CD4-positive, alpha-beta memory T cell (primary cell): ENCODE measurements at regions of chr9 and their contacts with region 1.

Region 1: DNA sequence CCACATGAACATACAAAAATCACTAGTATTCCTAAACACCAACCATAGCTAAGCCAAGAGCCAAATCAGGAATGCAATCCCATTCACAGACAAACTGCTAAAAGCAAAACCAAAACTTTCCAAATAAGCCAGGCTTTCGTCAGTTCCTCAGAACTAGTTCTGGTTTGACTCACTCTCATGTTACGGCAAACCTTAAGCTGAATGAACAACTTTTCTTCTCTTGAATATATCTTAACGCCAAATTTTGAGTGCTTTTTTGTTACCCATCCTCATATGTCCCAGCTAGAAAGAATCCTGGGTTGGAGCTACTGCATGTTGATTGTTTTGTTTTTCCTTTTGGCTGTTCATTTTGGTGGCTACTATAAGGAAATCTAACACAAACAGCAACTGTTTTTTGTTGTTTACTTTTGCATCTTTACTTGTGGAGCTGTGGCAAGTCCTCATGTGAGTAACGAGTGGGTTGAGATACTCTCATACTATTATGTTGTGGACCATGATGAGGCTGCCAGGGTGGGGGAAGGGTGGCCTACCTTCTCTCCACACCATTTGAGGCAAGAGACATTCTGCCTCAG is at the start of gene PDCD1LG2:
- DNase-seq: peak in 2 of 5 donors; percentile 9 to 10
- H3K4me3 ChIP-seq: peak within 1 kb of the TSS in 1 of 2 donors; percentile 16
- H3K4me3 Mint-ChIP-seq: peak within 1 kb of the TSS; percentile 82 to 90 (median 86)
- H3K27ac ChIP-seq: peak within 1 kb of the TSS; percentile 47
- H3K27ac Mint-ChIP-seq: peak within 1 kb of the TSS; percentile 80 to 95 (median 94)
- H3K4me1 ChIP-seq: peaks cover 34% of the 10 kb centered on the region
- H3K4me1 Mint-ChIP-seq: peaks cover 37 to 62% (median 46%) of the 10 kb centered on the region in 4 donors
- H3K27me3 ChIP-seq: no peaks in the 10 kb centered on the region
- H3K27me3 Mint-ChIP-seq: no peaks in the 10 kb centered on the region
- total RNA-seq, gene PDCD1LG2: 0.90 to 1.1 TPM

Region 2: GRCh38 chr9:5470122-5470521 is 40.3 kb before region 1 on chr9:
- CTCF ChIA-PET with region 1: no interaction called
- POLR2A ChIA-PET with region 1: no interaction called
- intact Hi-C with region 1: loop called (anchors 5 kb)
- DNase-seq: no peak
- H3K4me3 ChIP-seq: no peak overlapping the region
- H3K4me3 Mint-ChIP-seq: no peak overlapping the region
- H3K27ac ChIP-seq: no peak overlapping the region
- H3K27ac Mint-ChIP-seq: peak overlapping the region in 1 of 7 donors; percentile 34
- H3K4me1 ChIP-seq: no peaks in the 10 kb centered on the region
- H3K4me1 Mint-ChIP-seq: peaks cover 0 to 5% (median 1%) of the 10 kb centered on the region in 4 donors
- H3K27me3 ChIP-seq: no peaks in the 10 kb centered on the region
- H3K27me3 Mint-ChIP-seq: no peaks in the 10 kb centered on the region

Region 3: DNA sequence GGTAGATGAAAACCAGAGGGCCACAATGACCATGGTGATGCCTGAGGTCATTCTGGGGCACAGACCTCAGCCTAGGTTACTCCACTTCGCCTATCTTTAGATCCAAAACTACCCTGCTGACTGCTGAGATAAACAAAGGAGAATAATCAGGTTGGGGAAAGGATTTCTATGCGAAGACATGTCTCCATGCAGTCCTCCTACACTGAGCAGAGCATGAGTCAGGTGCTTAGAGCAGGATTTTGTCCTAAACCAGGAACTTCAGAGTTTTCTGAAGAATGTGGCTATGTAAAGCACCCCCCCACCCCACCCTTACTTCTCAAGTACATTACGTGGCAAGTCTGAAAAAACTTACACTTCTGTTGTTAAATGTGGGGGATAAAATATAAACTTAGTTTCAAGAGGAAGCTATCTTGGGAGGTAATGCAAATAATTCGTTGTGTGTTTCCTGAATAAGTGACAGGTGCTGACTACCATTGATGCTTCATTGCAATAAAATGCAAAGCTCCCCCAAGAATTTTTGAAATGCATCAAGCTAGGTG is 19.3 kb after region 1 on chr9:
- CTCF ChIA-PET with region 1: no interaction called
- POLR2A ChIA-PET with region 1: interaction called, 15 read pairs
- intact Hi-C with region 1: no loop called
- DNase-seq: no peak
- H3K4me3 ChIP-seq: no peak overlapping the region
- H3K4me3 Mint-ChIP-seq: peak overlapping the region in 1 of 8 donors; percentile 2
- H3K27ac ChIP-seq: no peak overlapping the region
- H3K27ac Mint-ChIP-seq: peak overlapping the region in 5 of 7 donors; percentile 36 to 86 (median 67)
- H3K4me1 ChIP-seq: peaks cover 37% of the 10 kb centered on the region
- H3K4me1 Mint-ChIP-seq: peaks cover 37 to 47% (median 42%) of the 10 kb centered on the region in 4 donors
- H3K27me3 ChIP-seq: no peaks in the 10 kb centered on the region
- H3K27me3 Mint-ChIP-seq: no peaks in the 10 kb centered on the region

Region 4: DNA sequence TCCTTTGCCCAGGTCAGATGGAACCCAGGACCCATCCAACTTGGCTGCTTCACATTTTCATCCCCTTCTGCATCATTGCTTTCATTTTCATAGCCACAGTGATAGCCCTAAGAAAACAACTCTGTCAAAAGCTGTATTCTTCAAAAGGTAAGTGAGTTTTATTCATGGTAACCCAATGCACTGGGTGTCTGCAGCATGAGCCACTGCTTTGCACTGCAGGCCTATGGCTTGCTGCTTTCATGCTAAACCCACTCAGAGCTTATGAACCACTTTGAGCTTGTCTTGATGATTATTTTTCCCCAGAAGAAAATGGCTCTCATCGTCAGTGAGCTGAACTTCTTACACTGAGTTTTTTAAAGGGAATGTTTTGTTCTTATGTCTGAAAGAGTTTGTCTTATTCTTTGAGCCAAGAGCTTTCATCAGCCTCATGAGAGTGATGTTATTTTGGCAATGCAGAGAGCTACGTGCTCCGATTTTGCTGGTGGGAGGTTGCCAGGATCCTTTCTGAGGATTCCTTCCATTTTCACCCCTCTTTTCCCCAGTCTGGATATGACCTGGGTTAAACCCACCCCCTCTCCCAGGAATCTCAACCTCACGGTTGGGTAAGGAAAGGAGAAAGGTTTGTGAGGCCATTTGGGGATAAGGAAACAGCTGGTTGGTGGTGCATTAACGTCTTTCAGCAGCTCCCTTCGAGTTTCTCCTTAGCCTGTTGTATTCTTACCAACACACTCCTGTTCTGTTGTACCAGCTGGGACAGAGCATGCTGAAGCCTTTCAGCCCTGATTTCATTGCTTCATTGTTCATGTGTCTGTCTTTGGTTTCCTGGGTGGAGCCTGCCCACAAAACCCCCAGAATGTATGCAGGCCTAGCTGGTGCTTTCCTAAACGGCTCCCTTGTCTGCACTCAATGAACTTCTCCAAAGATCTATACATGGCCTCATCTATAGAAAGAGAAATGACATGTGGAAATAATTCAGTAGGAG is 47.5 kb after region 1 on chr9:
- CTCF ChIA-PET with region 1: interaction called, 12 read pairs
- POLR2A ChIA-PET with region 1: interaction called, 9 read pairs
- intact Hi-C with region 1: loop called (anchors 5 kb)
- DNase-seq: peak; percentile 61 to 79 (median 68)
- H3K4me3 ChIP-seq: peak overlapping the region in 1 of 2 donors; percentile 14
- H3K4me3 Mint-ChIP-seq: peak overlapping the region in 7 of 8 donors; percentile 26 to 85 (median 68)
- H3K27ac ChIP-seq: peak overlapping the region; percentile 56
- H3K27ac Mint-ChIP-seq: peak overlapping the region; percentile 85 to 99 (median 95)
- H3K4me1 ChIP-seq: peaks cover 42% of the 10 kb centered on the region
- H3K4me1 Mint-ChIP-seq: peaks cover 36 to 70% (median 59%) of the 10 kb centered on the region in 4 donors
- H3K27me3 ChIP-seq: no peaks in the 10 kb centered on the region
- H3K27me3 Mint-ChIP-seq: no peaks in the 10 kb centered on the region